Caki2 (cell line): ENCODE measurements at regions of chr9 and their contacts with region 1.

Region 1: GRCh38 chr9:130265431-130266235 is at the start of gene HMCN2:
- DNase-seq: peak; percentile 16
- total RNA-seq, gene HMCN2: not detected in 2 replicates

Region 2: GRCh38 chr9:130824643-130825350 is 559.2 kb after region 1 on chr9:
- in situ Hi-C with region 1: loop called (anchors 25 kb)
- DNase-seq: peak; percentile 35